ENCODE measurements at regions of chr6 and their contacts with region 1.

Region 1: DNA sequence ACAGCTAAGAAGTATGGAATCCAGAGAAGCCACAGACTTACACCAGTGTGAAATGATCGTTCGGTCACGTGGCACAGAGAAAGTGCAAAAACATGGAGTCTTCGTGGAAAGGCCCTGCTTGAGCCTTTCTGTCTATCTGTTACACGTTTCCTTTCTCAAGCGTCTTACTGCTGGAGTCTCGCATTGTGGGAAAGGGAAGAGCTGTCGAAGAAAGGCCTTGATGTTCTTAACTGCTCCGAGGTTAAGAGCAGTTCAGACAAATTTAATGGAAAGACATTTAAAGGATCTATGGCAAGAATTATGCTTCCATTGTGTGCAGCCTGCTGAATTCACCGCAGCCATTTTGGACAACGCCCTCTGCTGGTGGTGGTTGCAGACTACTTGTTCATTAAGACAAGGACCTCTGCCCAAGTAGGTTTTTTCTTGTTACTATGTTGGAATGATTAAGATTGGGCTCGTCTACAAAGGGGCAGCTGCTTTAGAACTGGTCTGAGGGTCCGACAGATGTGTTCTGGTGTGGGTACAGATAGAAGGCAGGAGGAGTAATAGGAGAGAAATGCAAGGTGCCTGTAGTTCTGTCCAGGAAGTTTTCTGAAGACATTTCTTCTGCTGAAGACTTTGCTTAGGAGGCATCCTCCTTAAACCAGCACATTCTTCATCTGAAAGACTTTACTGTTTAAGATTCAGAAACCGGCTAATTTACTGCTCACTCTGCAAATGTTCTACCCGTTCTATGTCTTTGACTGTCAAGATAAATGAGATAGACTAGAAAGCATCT is 24.7 kb upstream of the CCN6 start:
- DNase-seq: no peak
- ATAC-seq: peak; percentile 87
- H3K4me3 ChIP-seq: no peak overlapping the region
- H3K27ac ChIP-seq: no peak overlapping the region
- H3K4me1 ChIP-seq: peaks cover 8% of the 10 kb centered on the region; the same call in 1 of the 2 replicates
- H3K27me3 ChIP-seq: no peaks in the 10 kb centered on the region
- CTCF ChIP-seq: peak; percentile 58 to 81 (median 79)
- EP300 ChIP-seq: no peak
- POLR2A ChIP-seq: no peak
- RAD21 ChIP-seq: peak; percentile 66

Region 2: GRCh38 chr6:111605100-111605751 is 424.0 kb before region 1 on chr6:
- CTCF ChIA-PET with region 1: no interaction called
- POLR2A ChIA-PET with region 1: no interaction called
- RAD21 ChIA-PET with region 1: no interaction called
- SMC1A ChIA-PET with region 1: no interaction called
- in situ Hi-C with region 1: no loop called
- intact Hi-C with region 1: no loop called
- DNase-seq: no peak
- ATAC-seq: peak; percentile 65
- H3K4me3 ChIP-seq: peak overlapping the region; percentile 74
- H3K27ac ChIP-seq: peak overlapping the region; percentile 87
- H3K4me1 ChIP-seq: peaks cover 11% of the 10 kb centered on the region; the same call in 1 of the 2 replicates
- H3K27me3 ChIP-seq: no peaks in the 10 kb centered on the region
- CTCF ChIP-seq: no peak
- EP300 ChIP-seq: no peak
- POLR2A ChIP-seq: no peak
- RAD21 ChIP-seq: no peak

Region 3: GRCh38 chr6:111912904-111913303 is 116.3 kb before region 1 on chr6:
- CTCF ChIA-PET with region 1: no interaction called
- POLR2A ChIA-PET with region 1: no interaction called
- RAD21 ChIA-PET with region 1: no interaction called
- SMC1A ChIA-PET with region 1: no interaction called
- in situ Hi-C with region 1: no loop called
- intact Hi-C with region 1: no loop called
- DNase-seq: no peak
- ATAC-seq: peak; percentile 32; the same call in 2 of the 3 replicates
- H3K4me3 ChIP-seq: no peak overlapping the region
- H3K27ac ChIP-seq: no peak overlapping the region
- H3K4me1 ChIP-seq: no peaks in the 10 kb centered on the region
- H3K27me3 ChIP-seq: no peaks in the 10 kb centered on the region
- CTCF ChIP-seq: no peak
- EP300 ChIP-seq: no peak
- POLR2A ChIP-seq: no peak
- RAD21 ChIP-seq: no peak

Region 4: GRCh38 chr6:112010328-112010727 is 18.9 kb before region 1 on chr6:
- CTCF ChIA-PET with region 1: interaction called, 78 read pairs
- POLR2A ChIA-PET with region 1: interaction called, 14 read pairs
- RAD21 ChIA-PET with region 1: interaction called, 5 read pairs
- SMC1A ChIA-PET with region 1: interaction called, 29 read pairs
- in situ Hi-C with region 1: no loop called
- intact Hi-C with region 1: no loop called
- DNase-seq: no peak
- ATAC-seq: peak; percentile 32; the same call in 1 of the 3 replicates
- H3K4me3 ChIP-seq: no peak overlapping the region
- H3K27ac ChIP-seq: no peak overlapping the region
- H3K4me1 ChIP-seq: no peaks in the 10 kb centered on the region
- H3K27me3 ChIP-seq: no peaks in the 10 kb centered on the region
- CTCF ChIP-seq: peak; percentile 7 to 25 (median 23); a peak in 4 of 6 replicates
- EP300 ChIP-seq: no peak
- POLR2A ChIP-seq: no peak
- RAD21 ChIP-seq: peak; percentile 64; the same call in 1 of the 2 replicates

Region 5: DNA sequence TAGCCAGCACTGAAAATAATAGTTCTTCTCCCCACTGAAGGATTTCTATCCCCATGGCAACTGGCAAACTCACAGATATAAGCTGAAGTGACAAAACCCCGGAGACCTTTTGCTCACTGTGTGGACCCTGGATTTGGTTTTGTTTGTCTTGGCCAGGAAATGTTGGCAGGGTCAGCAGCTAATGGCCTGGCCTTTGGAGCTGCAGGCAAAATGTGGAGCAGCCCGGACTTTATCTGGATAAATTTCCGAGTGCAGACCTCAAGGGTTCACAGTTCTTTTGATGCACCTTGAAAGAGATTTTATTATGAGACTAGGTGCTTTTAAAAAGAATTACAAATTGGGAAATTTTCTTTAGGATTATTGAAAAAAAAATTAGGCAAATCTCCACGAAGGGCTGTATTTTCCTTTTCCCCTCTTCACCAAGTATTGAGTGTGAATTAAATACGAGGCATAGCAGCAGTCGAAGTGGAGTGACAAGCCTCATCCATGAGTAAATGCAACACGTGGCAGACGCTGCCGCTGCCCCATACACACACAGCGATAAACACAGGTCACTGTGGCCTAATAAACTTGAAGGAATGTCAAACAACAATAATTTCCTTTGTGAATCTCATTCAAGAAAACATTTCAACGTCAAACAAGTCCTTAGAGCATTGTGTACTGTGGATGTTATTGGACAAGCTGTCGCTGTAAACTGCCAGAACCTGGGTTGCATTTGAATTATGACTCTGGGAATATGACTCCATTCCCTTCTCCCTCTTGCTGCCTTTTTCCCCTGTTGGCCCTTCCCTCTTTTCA is 10.4 kb before region 1 on chr6:
- CTCF ChIA-PET with region 1: interaction called, 78 read pairs
- POLR2A ChIA-PET with region 1: interaction called, 14 read pairs
- RAD21 ChIA-PET with region 1: interaction called, 13 read pairs
- SMC1A ChIA-PET with region 1: interaction called, 29 read pairs
- in situ Hi-C with region 1: no loop called
- intact Hi-C with region 1: no loop called
- DNase-seq: no peak
- ATAC-seq: no peak
- H3K4me3 ChIP-seq: no peak overlapping the region
- H3K27ac ChIP-seq: no peak overlapping the region
- H3K4me1 ChIP-seq: peaks cover 16% of the 10 kb centered on the region; the same call in 1 of the 2 replicates
- H3K27me3 ChIP-seq: no peaks in the 10 kb centered on the region
- CTCF ChIP-seq: no peak
- EP300 ChIP-seq: no peak
- POLR2A ChIP-seq: no peak
- RAD21 ChIP-seq: no peak

Measured in GM12878 (cell line).